Activated B cell treated with CpG ODN at 0.5 μM for 24 hours (primary cell): ENCODE measurements at regions of chr9 and their contacts with region 1.

Region 1: DNA sequence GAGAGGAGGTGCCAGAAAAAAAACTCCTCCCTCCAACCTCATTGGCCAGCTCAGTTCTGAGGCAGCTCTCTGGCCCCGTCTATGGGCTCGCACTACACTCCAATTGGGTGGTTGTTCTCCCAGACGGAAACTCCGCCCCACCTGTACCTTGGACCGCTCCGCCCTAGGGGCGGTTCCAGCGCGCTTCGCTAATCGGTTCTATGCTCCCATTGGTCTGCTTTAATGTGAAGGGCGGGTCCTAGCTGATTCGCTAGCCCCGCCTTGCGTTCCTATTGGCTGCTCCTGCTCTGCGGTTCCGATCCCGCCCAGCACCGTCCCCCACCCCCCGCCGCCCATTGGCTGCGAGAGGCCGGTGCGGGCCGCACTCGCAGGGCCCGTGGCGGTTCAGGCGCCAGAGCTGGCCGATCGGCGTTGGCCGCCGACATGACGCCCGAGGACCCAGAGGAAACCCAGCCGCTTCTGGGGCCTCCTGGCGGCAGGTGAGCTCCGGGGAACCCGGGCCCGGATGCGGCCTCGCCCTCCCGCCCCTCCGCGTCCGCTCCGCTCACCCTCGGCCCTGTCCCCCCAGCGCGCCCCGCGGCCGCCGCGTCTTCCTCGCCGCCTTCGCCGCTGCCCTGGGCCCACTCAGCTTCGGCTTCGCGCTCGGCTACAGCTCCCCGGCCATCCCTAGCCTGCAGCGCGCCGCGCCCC is at the start of gene SLC2A8:
- DNase-seq: peak; percentile 93
- ATAC-seq: peak; percentile 94
- H3K4me3 Mint-ChIP-seq: peak within 1 kb of the TSS; percentile 83
- H3K27ac Mint-ChIP-seq: peak within 1 kb of the TSS; percentile 35
- H3K4me1 Mint-ChIP-seq: peaks cover 10% of the 10 kb centered on the region
- H3K27me3 Mint-ChIP-seq: no peaks in the 10 kb centered on the region
- CTCF ChIP-seq: no peak
- total RNA-seq, gene SLC2A8: 13.4 and 17.1 TPM in 2 replicates

Region 2: DNA sequence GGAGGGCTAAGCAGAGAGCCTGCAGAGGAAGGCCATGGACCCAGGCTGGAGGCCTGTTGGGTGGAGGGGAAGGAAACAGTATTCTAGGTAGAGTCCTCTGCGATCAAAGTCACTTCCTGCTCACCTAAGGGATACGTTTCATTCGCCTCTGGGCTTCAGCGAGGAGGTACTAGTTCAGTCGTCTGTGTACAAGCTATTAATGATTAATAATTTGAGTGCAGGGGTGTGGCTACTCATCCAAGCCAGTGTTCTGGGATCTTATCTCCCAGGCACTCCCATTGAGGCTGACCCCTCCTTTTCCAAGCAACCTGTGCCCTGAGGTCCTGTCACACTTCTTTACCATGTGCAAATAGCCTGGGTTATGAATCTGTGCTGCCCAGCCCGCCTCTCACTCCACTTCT is 457.1 kb before region 1 on chr9:
- CTCF ChIA-PET with region 1: no interaction called
- POLR2A ChIA-PET with region 1: no interaction called
- intact Hi-C with region 1: loop called (anchors 2 kb)
- DNase-seq: no peak
- ATAC-seq: no peak
- H3K4me3 Mint-ChIP-seq: no peak overlapping the region
- H3K27ac Mint-ChIP-seq: no peak overlapping the region
- H3K4me1 Mint-ChIP-seq: peaks cover 5% of the 10 kb centered on the region
- H3K27me3 Mint-ChIP-seq: no peaks in the 10 kb centered on the region
- CTCF ChIP-seq: no peak

Region 3: GRCh38 chr9:127214421-127215267 is 182.3 kb before region 1 on chr9:
- CTCF ChIA-PET with region 1: interaction called, 23 read pairs
- POLR2A ChIA-PET with region 1: interaction called, 3 read pairs
- intact Hi-C with region 1: loop called (anchors 1 kb)
- DNase-seq: no peak
- ATAC-seq: peak; percentile 86
- H3K4me3 Mint-ChIP-seq: no peak overlapping the region
- H3K27ac Mint-ChIP-seq: no peak overlapping the region
- H3K4me1 Mint-ChIP-seq: peaks cover 4% of the 10 kb centered on the region
- H3K27me3 Mint-ChIP-seq: no peaks in the 10 kb centered on the region
- CTCF ChIP-seq: peak; percentile 17

Region 4: DNA sequence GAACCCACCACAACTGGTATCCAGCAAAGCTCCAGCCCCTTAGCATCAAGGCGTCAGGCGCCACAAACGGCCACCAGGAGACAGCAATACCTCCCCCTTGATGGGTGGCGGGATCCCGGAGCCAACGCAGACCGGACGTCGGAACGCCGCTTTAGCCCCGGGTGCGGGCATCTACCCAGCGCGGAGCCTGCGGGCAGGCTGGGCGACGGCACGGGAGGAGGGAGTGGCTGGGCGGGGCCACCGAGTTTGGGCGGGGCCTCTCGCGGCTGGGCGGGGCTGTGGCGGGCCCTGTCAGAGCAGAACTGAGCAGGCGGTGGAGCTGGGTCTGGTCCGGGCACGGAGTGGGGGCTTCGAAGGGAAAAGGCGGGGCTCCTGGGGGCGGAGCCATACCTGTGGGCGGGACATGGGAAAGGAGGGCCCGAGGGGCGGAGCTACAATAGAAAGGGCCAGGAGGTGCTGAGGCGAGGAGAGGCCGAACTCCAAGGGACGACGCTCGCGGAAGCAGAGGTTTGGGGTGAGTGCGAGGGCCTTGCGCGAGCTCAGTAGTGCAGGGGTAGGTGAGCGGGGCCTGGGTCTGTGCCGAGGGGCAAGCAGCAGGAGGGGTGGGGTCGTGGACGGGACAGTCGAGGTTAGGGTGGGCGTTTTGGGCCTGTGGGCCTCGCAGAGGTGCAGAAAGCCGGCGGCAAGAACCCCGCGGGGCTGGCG is 172.6 kb before region 1 on chr9:
- CTCF ChIA-PET with region 1: interaction called, 5 read pairs
- POLR2A ChIA-PET with region 1: interaction called, 28 read pairs
- intact Hi-C with region 1: loop called (anchors 1 kb)
- DNase-seq: peak; percentile 94
- ATAC-seq: peak; percentile 79
- H3K4me3 Mint-ChIP-seq: peak overlapping the region; percentile 85
- H3K27ac Mint-ChIP-seq: peak overlapping the region; percentile 73
- H3K4me1 Mint-ChIP-seq: peaks cover 41% of the 10 kb centered on the region
- H3K27me3 Mint-ChIP-seq: peaks cover 3% of the 10 kb centered on the region
- CTCF ChIP-seq: no peak

Region 5: DNA sequence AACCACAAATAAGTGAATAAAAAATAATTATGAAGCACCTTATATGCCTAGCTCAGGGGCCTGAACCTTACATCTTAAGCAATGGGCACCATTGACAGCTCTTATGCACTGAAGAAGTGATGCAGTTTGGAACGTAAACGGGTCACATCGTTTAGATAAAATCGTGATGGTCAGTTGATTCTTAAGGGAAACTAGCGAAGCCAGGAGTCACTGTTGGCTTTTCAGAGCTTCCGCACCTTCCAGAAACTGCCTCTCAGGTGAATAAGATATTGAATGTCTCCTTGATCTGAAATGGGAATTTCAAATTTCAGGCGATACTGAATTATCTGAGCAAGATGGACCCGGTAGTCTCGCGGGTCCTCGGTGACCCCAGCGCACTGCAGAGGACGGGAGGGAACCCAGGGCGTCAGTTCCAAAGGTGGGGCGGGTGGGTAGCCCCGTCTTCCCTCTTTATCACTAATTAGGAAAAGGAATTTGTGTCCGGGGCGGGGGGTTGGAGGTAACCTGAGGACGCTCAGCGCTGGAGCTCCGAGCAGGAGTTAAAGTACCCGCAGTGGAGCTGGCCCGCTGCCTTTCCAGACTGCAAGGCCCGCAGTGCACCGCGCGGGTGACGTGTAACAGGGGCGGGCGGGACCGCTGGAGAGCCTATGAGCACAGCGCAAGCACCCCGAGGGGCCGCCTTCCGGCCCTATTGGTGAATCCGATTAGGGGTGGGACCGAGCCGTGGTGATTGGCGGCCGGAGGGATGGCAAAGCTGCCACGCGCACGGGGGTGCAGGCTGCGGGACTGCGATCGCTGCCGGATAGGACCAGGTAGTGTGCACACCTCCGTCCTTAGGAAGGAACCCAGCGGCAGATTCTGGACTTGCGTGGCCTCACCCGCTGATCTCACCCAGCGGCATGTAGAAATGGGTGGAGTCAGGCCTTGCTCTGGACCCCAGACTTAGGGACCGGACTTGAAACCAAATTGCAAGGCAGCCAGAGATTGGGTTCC is 152.0 kb before region 1 on chr9:
- CTCF ChIA-PET with region 1: no interaction called
- POLR2A ChIA-PET with region 1: interaction called, 3 read pairs
- intact Hi-C with region 1: loop called (anchors 1 kb)
- DNase-seq: peak; percentile 91
- ATAC-seq: peak; percentile 100
- H3K4me3 Mint-ChIP-seq: peak overlapping the region; percentile 90
- H3K27ac Mint-ChIP-seq: peak overlapping the region; percentile 86
- H3K4me1 Mint-ChIP-seq: peaks cover 11% of the 10 kb centered on the region
- H3K27me3 Mint-ChIP-seq: no peaks in the 10 kb centered on the region
- CTCF ChIP-seq: no peak

Region 6: GRCh38 chr9:127423934-127424675 is 27.2 kb after region 1 on chr9 and contains the start of gene ZNF79:
- CTCF ChIA-PET with region 1: no interaction called
- POLR2A ChIA-PET with region 1: interaction called, 11 read pairs
- intact Hi-C with region 1: loop called (anchors 1 kb)
- DNase-seq: peak; percentile 93
- ATAC-seq: peak; percentile 94
- H3K4me3 Mint-ChIP-seq: peak within 1 kb of the TSS; percentile 99
- H3K27ac Mint-ChIP-seq: peak within 1 kb of the TSS; percentile 98
- H3K4me1 Mint-ChIP-seq: peaks cover 41% of the 10 kb centered on the region
- H3K27me3 Mint-ChIP-seq: no peaks in the 10 kb centered on the region
- CTCF ChIP-seq: no peak
- total RNA-seq, gene ZNF79: 13.5 and 14.0 TPM in 2 replicates

Region 7: DNA sequence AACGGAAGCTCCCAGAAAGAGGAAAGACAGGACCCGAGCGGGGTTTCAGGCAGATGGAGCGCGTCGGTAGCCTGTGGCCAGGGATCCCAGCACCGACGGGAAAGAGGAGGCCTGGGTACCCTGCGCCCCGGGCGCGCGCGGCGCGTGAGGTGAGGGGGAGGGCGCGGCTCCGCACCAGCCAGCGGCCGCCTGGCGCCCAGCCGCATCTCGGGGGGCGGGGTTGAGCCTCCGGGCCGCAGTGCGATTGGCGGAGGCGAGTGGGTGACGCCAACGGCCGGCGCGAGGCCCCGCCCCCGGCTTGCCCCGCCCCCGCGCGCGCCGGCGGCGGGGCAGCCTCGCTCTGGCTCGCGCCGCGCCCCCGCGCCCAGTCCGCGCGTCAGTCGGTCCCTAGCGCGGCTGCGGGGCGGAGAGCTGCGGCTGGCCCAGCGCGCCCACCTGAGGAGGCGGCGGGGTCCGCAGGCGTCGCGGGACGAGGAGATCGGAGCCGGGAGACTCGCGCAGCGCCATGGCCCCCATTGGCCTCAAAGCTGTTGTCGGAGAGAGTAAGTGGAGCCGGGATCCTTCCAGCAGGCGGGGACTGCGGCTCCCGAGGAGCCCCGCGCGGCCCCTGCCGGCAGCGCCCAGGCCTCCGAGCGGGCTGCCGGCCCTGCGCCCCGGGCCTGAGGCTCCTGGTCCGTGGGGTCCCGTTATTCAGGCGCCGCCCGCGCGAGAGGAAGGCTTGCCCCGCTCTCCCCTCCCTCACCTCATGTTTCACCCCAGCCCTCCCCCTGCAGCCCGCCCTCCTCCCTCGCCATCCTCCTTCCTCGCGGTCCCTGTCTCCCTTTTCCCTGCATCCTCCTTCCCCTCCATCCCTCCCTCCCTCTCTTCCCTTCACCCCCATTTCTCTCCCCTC is 215.2 kb after region 1 on chr9 and contains the start of gene STXBP1:
- CTCF ChIA-PET with region 1: no interaction called
- POLR2A ChIA-PET with region 1: no interaction called
- intact Hi-C with region 1: loop called (anchors 5 kb)
- DNase-seq: peak; percentile 88
- ATAC-seq: peak; percentile 92
- H3K4me3 Mint-ChIP-seq: peak within 1 kb of the TSS; percentile 90
- H3K27ac Mint-ChIP-seq: peak within 1 kb of the TSS; percentile 56
- H3K4me1 Mint-ChIP-seq: peaks cover 25% of the 10 kb centered on the region
- H3K27me3 Mint-ChIP-seq: peaks cover 37% of the 10 kb centered on the region
- CTCF ChIP-seq: no peak
- total RNA-seq, gene STXBP1: 0.20 and 0.73 TPM in 2 replicates